ENCODE measurements at regions of chr4 and their contacts with region 1.

Region 1: DNA sequence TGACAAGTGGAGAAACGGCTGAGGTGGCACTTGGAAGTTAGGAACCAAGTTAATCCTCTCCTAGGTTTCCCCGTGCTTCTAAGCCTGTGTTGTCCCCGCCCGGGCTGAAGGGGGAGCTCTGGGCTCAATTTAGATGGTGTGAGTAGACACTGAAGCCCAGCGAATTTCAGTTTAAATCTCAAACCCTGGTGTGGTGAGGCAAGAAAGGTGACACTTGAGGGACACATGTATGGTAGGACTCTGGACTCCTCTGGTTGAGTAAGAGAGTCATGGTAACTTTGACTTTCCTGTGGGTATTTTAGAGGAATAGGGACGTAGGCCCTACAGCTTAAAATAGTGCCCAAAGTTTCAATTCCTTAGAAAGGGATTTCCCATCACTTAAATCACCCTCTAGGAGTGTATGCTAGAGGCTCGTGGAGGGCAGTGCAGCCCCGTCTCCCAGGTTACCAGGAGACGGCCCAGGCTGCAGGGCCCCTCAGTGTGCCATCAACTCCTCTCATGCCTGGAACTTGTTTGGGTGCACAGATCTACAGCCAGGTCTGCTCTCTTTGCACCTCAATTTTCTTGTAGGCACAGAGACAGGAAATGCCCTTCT is 24.0 kb downstream of the HAND2 start:
- DNase-seq: peak; percentile 64 to 76 (median 73)
- ATAC-seq: peak; percentile 48 to 75 (median 68)
- H3K4me3 ChIP-seq: peak overlapping the region in 10 of 12 donors; percentile 14 to 61 (median 46)
- H3K27ac ChIP-seq: peak overlapping the region; percentile 38 to 94 (median 83)
- H3K4me1 ChIP-seq: peaks cover 0 to 40% (median 23%) of the 10 kb centered on the region in 12 donors
- H3K27me3 ChIP-seq: peaks cover 0 to 95% (median 10%) of the 10 kb centered on the region in 9 donors
- CTCF ChIP-seq: peak; percentile 49 to 82 (median 72)
- POLR2A ChIP-seq: no peak

Region 2: GRCh38 chr4:173746424-173746823 is 240.4 kb after region 1 on chr4:
- intact Hi-C with region 1: loop called (anchors 2 to 10 kb)
- DNase-seq: no peak
- ATAC-seq: peak; percentile 54 to 66 (median 60)
- H3K4me3 ChIP-seq: peak overlapping the region in 4 of 12 donors; percentile 2 to 8 (median 6)
- H3K27ac ChIP-seq: peak overlapping the region; percentile 51 to 90 (median 76)
- H3K4me1 ChIP-seq: peaks cover 0 to 27% (median 0%) of the 10 kb centered on the region in 12 donors
- H3K27me3 ChIP-seq: no peaks in the 10 kb centered on the region
- CTCF ChIP-seq: no peak
- POLR2A ChIP-seq: no peak

Region 3: GRCh38 chr4:173827707-173828106 is 321.7 kb after region 1 on chr4:
- intact Hi-C with region 1: loop called in 2 of 10 experiments (anchors 10 kb)
- DNase-seq: no peak
- ATAC-seq: no peak
- H3K4me3 ChIP-seq: no peak overlapping the region
- H3K27ac ChIP-seq: no peak overlapping the region
- H3K4me1 ChIP-seq: no peaks in the 10 kb centered on the region
- H3K27me3 ChIP-seq: no peaks in the 10 kb centered on the region
- CTCF ChIP-seq: peak in 5 of 12 donors; percentile 18 to 25 (median 24)
- POLR2A ChIP-seq: no peak

Region 4: DNA sequence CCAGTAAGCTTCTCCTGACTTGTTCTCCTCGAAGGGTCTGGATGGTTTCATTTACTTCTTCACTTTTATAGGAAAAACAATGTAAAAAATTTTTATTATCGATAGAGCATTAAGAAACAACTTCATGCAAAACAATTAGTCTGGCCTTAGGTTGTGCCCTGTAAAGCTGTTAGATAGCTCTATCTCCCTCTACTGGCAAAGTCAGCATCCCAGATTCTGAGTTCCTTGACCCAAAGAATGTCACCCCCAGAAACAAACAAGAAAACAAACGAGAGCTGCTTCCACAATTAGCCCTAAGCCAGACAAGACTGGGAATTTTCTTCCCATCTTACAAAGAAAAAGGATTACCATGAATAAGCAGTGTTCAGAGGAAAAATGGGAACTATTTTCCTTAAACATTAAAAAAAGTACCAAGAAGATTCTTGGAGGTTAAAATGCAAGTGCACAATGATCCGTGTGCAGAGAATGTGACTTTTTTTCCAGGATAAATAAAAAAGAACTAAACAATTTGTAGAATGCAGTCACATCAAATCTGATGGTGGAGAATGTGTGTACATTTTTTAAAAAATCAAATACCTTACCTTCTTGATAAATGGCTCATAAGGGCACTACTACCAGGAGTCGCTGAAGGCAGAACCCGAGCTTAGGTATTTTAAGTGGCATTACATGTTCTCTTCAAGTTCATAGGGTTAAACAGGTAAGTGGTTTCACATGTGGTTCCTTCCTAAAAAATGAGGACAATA is 484.3 kb after region 1 on chr4:
- intact Hi-C with region 1: loop called in 9 of 10 experiments (anchors 2 to 10 kb)
- DNase-seq: no peak
- ATAC-seq: peak; percentile 71 to 87 (median 83)
- H3K4me3 ChIP-seq: peak overlapping the region in 9 of 12 donors; percentile 2 to 37 (median 21)
- H3K27ac ChIP-seq: peak overlapping the region in 11 of 12 donors; percentile 29 to 75 (median 69)
- H3K4me1 ChIP-seq: peaks cover 0 to 19% (median 5%) of the 10 kb centered on the region in 12 donors
- H3K27me3 ChIP-seq: no peaks in the 10 kb centered on the region
- CTCF ChIP-seq: peak; percentile 28 to 66 (median 50)
- POLR2A ChIP-seq: no peak

Region 5: DNA sequence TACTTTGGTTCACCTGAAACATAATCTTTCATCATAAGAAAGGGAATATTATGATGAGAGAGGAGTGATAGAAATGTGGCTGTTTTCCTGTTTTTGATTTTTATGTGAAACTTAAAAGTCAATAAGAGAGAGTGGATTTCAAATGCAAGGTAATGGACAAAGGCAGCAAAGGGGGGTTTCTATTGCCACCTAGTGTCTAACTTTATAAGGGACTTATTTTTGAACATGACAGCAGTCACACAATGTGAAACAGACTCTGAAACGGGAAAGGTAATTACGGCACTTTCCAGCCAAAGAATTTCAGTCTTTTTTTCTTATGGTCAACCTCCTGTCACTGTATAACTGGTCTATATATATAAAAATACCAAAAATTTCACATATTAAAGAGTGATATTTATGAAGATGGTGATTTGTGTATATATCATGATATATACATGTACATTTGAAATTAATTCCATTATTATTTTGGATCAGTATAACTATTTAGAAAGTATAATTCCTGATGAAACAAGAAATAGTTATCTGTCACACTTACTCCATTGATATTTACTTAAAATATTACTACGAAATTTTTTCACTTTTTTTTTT is 650.3 kb after region 1 on chr4:
- intact Hi-C with region 1: loop called in 8 of 10 experiments (anchors 2 to 10 kb)
- DNase-seq: no peak
- ATAC-seq: peak; percentile 72 to 82 (median 78)
- H3K4me3 ChIP-seq: peak overlapping the region in 2 of 12 donors; percentile 13 to 32
- H3K27ac ChIP-seq: peak overlapping the region in 4 of 12 donors; percentile 19 to 79 (median 28)
- H3K4me1 ChIP-seq: peaks cover 0 to 19% (median 0%) of the 10 kb centered on the region in 12 donors
- H3K27me3 ChIP-seq: no peaks in the 10 kb centered on the region
- CTCF ChIP-seq: peak; percentile 46 to 76 (median 62)
- POLR2A ChIP-seq: no peak

Measured in heart left ventricle (tissue), 16 donors.